AG04449 (cell line): ENCODE measurements at regions of chr11 and their contacts with region 1.

Region 1: GRCh38 chr11:3849297-3849874 is 6.1 kb upstream of the STIM1 start:
- DNase-seq: no peak
- H3K4me3 ChIP-seq: no peak overlapping the region
- CTCF ChIP-seq: peak; percentile 52

Region 2: DNA sequence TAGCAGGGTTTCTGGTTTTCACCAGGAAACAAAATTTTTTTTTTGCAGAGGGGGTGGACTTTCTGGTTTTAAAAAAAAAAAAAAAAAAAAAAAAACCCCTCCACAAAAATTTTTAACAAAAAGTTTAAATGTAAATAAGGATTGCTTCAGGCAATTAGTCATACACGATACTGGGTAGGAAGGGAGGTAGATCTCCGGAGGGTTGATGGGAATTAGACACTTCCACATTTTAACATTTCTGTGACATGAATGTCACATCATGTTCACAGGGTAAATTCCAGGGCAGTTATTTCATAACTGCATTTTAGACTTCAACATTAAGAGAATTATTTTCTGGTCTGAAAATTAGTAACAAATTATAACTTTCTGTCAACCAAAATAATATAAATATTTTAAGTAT is 68.0 kb before region 1 on chr11:
- CTCF ChIA-PET with region 1: no interaction called
- POLR2A ChIA-PET with region 1: no interaction called
- DNase-seq: no peak
- H3K4me3 ChIP-seq: no peak overlapping the region
- CTCF ChIP-seq: no peak

Region 3: GRCh38 chr11:3824714-3825472 is 24.5 kb before region 1 on chr11:
- CTCF ChIA-PET with region 1: interaction called, 332 read pairs
- POLR2A ChIA-PET with region 1: no interaction called
- DNase-seq: no peak
- H3K4me3 ChIP-seq: no peak overlapping the region
- CTCF ChIP-seq: peak; percentile 64

Region 4: GRCh38 chr11:3894128-3894731 is 44.8 kb after region 1 on chr11:
- CTCF ChIA-PET with region 1: interaction called, 20 read pairs
- POLR2A ChIA-PET with region 1: no interaction called
- DNase-seq: no peak
- H3K4me3 ChIP-seq: no peak overlapping the region
- CTCF ChIP-seq: no peak

Region 5: GRCh38 chr11:3971756-3972404 is 122.5 kb after region 1 on chr11:
- CTCF ChIA-PET with region 1: interaction called, 21 read pairs
- POLR2A ChIA-PET with region 1: no interaction called
- DNase-seq: no peak
- H3K4me3 ChIP-seq: no peak overlapping the region
- CTCF ChIP-seq: no peak

Region 6: DNA sequence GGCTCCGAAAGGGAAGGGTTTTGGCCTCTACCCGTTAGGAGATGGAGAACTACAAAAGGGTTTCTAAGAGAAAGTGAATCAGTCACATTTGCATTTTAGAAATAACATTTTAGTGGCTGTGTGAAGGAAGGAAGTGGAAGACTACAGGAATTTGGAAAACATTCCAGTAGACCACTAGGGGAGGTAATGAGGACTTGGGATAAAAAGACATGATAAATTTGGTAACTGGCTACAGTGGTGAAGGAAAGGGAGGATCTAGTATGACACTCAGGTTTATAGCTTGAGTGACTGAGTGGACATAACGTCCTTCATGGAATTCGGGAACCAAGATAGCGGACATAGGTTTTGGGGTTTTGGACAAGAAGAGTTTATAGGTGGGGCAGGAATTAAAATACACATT is 238.2 kb after region 1 on chr11:
- CTCF ChIA-PET with region 1: interaction called, 77 read pairs
- POLR2A ChIA-PET with region 1: no interaction called
- DNase-seq: no peak
- H3K4me3 ChIP-seq: no peak overlapping the region
- CTCF ChIP-seq: peak; percentile 21